ENCODE measurements at regions of chr5 and their contacts with region 1.

Region 1: GRCh38 chr5:170747851-170748250 is 35.7 kb upstream of the GABRP start:
- DNase-seq: no peak
- H3K4me3 ChIP-seq: no peak overlapping the region
- H3K27ac ChIP-seq: no peak overlapping the region
- H3K4me1 ChIP-seq: peaks cover 0 to 27% (median 21%) of the 10 kb centered on the region in 6 donors
- H3K27me3 ChIP-seq: peaks cover 0 to 95% (median 14%) of the 10 kb centered on the region in 7 donors
- CTCF ChIP-seq: peak in 2 of 11 experiments; percentile 21 to 23
- POLR2A ChIP-seq: no peak

Region 2: GRCh38 chr5:170791325-170791954 is 43.6 kb after region 1 on chr5:
- intact Hi-C with region 1: loop called (anchors 2 kb)
- DNase-seq: no peak
- H3K4me3 ChIP-seq: no peak overlapping the region
- H3K27ac ChIP-seq: no peak overlapping the region
- H3K4me1 ChIP-seq: no peaks in the 10 kb centered on the region
- H3K27me3 ChIP-seq: no peaks in the 10 kb centered on the region
- CTCF ChIP-seq: peak in 6 of 11 experiments; percentile 41 to 54 (median 50)
- POLR2A ChIP-seq: no peak

Region 3: GRCh38 chr5:170832254-170832653 is 84.4 kb after region 1 on chr5:
- intact Hi-C with region 1: no loop called
- DNase-seq: no peak
- H3K4me3 ChIP-seq: no peak overlapping the region
- H3K27ac ChIP-seq: no peak overlapping the region
- H3K4me1 ChIP-seq: no peaks in the 10 kb centered on the region
- H3K27me3 ChIP-seq: peaks cover 0 to 21% (median 0%) of the 10 kb centered on the region in 7 donors
- CTCF ChIP-seq: no peak
- POLR2A ChIP-seq: no peak

Region 4: GRCh38 chr5:171342362-171343111 is 594.7 kb after region 1 on chr5:
- intact Hi-C with region 1: loop called (anchors 5 kb)
- DNase-seq: peak; percentile 15
- H3K4me3 ChIP-seq: no peak overlapping the region
- H3K27ac ChIP-seq: no peak overlapping the region
- H3K4me1 ChIP-seq: no peaks in the 10 kb centered on the region
- H3K27me3 ChIP-seq: peaks cover 0 to 60% (median 5%) of the 10 kb centered on the region in 7 donors
- CTCF ChIP-seq: peak in 9 of 11 experiments; percentile 8 to 50 (median 42)
- POLR2A ChIP-seq: no peak

Region 5: GRCh38 chr5:171647032-171647903 is 899.4 kb after region 1 on chr5:
- intact Hi-C with region 1: no loop called
- DNase-seq: no peak
- H3K4me3 ChIP-seq: no peak overlapping the region
- H3K27ac ChIP-seq: peak overlapping the region in 1 of 8 donors; percentile 17
- H3K4me1 ChIP-seq: peaks cover 0 to 15% (median 0%) of the 10 kb centered on the region in 6 donors
- H3K27me3 ChIP-seq: peaks cover 0 to 16% (median 0%) of the 10 kb centered on the region in 7 donors
- CTCF ChIP-seq: no peak
- POLR2A ChIP-seq: no peak